MCF 10A (cell line): ENCODE measurements at regions of chr2 and their contacts with region 1.

Region 1: DNA sequence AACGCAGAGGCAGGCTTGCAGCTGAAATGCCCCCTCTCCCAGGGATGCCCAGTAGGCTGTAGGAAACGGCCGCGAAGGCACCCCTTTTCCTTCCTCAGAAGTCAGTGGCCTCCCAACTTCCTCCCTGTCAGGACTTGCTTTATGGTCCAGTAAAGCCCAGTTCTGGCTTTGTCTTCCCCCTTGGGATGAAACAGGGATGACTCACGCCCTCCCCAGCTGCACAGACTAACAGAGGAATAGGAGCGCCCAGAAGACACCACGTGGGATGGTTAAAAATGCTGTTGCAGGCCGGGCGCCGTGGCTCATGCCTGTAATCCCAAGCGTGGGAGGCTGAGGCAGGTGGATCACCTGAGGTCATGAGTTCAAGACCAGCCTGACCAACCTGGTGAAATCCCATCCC is 6.9 kb downstream of the CREG2 start:
- DNase-seq: peak; percentile 94
- H3K4me3 Mint-ChIP-seq: no peak overlapping the region
- H3K27ac Mint-ChIP-seq: no peak overlapping the region
- H3K4me1 Mint-ChIP-seq: peaks cover 9% of the 10 kb centered on the region
- H3K27me3 Mint-ChIP-seq: no peaks in the 10 kb centered on the region
- CTCF ChIP-seq: no peak

Region 2: GRCh38 chr2:101361121-101361870 is 19.1 kb before region 1 on chr2:
- CTCF ChIA-PET with region 1: interaction called, 3 read pairs
- POLR2A ChIA-PET with region 1: interaction called, 10 read pairs
- intact Hi-C with region 1: no loop called
- DNase-seq: peak; percentile 26
- H3K4me3 Mint-ChIP-seq: no peak overlapping the region
- H3K27ac Mint-ChIP-seq: no peak overlapping the region
- H3K4me1 Mint-ChIP-seq: peaks cover 34% of the 10 kb centered on the region
- H3K27me3 Mint-ChIP-seq: no peaks in the 10 kb centered on the region
- CTCF ChIP-seq: no peak